AG04449 (cell line): ENCODE measurements at regions of chr1 and their contacts with region 1.

Region 1: GRCh38 chr1:39408641-39409054 is 82.8 kb upstream of the BMP8A start:
- DNase-seq: peak; percentile 28
- H3K4me3 ChIP-seq: peak overlapping the region; percentile 68
- CTCF ChIP-seq: no peak

Region 2: GRCh38 chr1:39354572-39354971 is 54.1 kb before region 1 on chr1:
- CTCF ChIA-PET with region 1: interaction called, 13 read pairs
- POLR2A ChIA-PET with region 1: no interaction called
- DNase-seq: no peak
- H3K4me3 ChIP-seq: no peak overlapping the region
- CTCF ChIP-seq: no peak

Region 3: GRCh38 chr1:39378377-39378776 is 30.3 kb before region 1 on chr1:
- CTCF ChIA-PET with region 1: interaction called, 17 read pairs
- POLR2A ChIA-PET with region 1: interaction called, 3 read pairs
- DNase-seq: no peak
- H3K4me3 ChIP-seq: no peak overlapping the region
- CTCF ChIP-seq: no peak

Region 4: DNA sequence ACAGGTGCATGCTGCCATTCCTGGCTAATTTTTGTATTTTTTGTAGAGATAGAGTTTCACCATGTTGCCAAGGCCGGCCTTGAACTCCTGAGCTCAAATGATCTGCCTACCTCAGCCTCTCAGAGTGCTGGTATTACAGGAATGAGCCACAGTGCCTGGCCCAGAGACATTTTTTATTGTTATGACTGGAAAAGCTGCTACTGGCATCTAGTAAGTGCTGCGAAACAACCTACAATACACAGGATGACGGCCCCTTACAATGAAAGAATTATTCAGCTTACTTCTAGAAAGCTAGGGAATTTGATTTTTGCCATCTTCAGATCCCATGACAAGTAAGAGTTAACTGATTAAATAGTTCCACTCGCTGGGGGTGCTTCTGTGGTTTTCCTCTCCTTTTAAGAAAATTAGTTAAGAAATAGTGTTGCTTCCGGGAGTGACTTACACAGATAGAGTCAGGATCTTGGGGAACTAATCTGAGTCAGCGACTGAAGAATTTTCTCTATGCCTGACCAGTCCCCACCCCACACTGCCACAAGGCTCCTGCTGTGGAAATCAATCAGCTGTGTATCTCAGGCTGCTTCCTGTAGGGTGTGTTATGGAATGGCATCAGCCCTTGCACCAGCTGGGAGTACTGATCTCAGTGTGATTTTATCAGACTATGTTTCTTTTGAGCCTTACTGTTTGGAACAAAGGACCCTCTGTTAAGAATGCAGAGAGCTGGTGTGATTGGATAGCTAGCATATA is 10.2 kb before region 1 on chr1:
- CTCF ChIA-PET with region 1: interaction called, 58 read pairs
- POLR2A ChIA-PET with region 1: interaction called, 33 read pairs
- DNase-seq: peak; percentile 91
- H3K4me3 ChIP-seq: no peak overlapping the region
- CTCF ChIP-seq: no peak

Region 5: DNA sequence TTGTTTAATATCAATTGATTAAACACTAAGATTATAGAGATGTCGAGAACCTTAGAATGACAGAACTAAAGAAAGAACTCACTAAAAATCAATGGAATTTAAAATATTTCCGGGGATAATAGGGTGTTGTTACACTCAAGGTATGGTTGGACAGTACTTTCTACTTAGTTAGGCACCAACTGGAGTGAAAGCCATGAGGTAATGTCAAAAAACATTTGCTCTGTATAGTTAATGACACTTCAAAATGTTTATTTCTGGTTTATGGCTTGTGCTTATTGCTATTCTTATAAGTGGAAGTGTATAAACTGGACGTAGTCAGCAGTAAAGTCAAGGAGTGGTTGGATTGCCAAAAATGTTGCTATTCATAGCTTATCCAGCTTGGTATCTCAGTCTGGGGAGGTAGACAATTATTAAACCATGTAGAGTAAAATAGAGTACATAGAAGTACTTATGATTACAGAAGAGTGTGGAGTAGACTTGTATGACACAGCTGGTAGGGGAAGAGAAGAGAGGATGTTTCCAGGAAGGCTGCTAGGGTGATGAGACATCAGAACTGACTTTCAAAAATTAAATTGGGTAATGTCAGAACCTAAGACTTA is 26.2 kb after region 1 on chr1:
- CTCF ChIA-PET with region 1: interaction called, 16 read pairs
- POLR2A ChIA-PET with region 1: no interaction called
- DNase-seq: no peak
- H3K4me3 ChIP-seq: no peak overlapping the region
- CTCF ChIP-seq: no peak

Region 6: GRCh38 chr1:39474810-39475209 is 66.2 kb after region 1 on chr1:
- CTCF ChIA-PET with region 1: no interaction called
- POLR2A ChIA-PET with region 1: no interaction called
- DNase-seq: no peak
- H3K4me3 ChIP-seq: no peak overlapping the region
- CTCF ChIP-seq: no peak

Region 7: GRCh38 chr1:39545531-39545930 is 136.9 kb after region 1 on chr1:
- CTCF ChIA-PET with region 1: no interaction called
- POLR2A ChIA-PET with region 1: no interaction called
- DNase-seq: no peak
- H3K4me3 ChIP-seq: no peak overlapping the region
- CTCF ChIP-seq: no peak